PC-3 (cell line): ENCODE measurements at regions of chr4 and their contacts with region 1.

Region 1: GRCh38 chr4:151227731-151228130 is 49.2 kb upstream of the PRSS48 start:
- DNase-seq: peak; percentile 35
- ATAC-seq: peak; percentile 51
- H3K4me3 ChIP-seq: no peak overlapping the region
- H3K27ac ChIP-seq: no peak overlapping the region
- H3K4me1 ChIP-seq: peaks cover 37% of the 10 kb centered on the region
- H3K27me3 ChIP-seq: no peaks in the 10 kb centered on the region
- CTCF ChIP-seq: no peak

Region 2: GRCh38 chr4:151169223-151169622 is 58.5 kb before region 1 on chr4:
- CTCF ChIA-PET with region 1: no interaction called
- POLR2A ChIA-PET with region 1: no interaction called
- intact Hi-C with region 1: loop called (anchors 5 kb)
- DNase-seq: no peak
- ATAC-seq: no peak
- H3K4me3 ChIP-seq: no peak overlapping the region
- H3K27ac ChIP-seq: no peak overlapping the region
- H3K4me1 ChIP-seq: peaks cover 16% of the 10 kb centered on the region
- H3K27me3 ChIP-seq: no peaks in the 10 kb centered on the region
- CTCF ChIP-seq: no peak

Region 3: DNA sequence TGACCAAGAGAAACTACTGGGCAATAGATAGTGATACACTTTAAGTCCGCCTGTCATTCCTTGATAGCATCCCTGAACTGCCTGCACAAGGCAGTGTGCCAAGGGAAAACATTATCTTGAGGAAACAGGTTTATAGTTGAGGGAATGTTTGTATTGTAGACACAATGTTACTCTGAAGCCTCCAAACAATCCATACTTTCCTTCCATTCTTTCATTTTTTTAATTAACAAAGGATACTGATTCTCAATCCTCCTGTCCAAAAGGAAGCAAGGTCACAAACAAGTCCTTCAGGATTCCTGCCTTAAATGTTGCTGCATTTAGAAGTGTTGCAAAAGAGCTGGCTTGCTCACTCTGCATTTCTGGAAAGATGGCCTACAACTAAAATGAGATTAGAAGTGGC is 12.4 kb before region 1 on chr4:
- CTCF ChIA-PET with region 1: no interaction called
- POLR2A ChIA-PET with region 1: no interaction called
- intact Hi-C with region 1: no loop called
- DNase-seq: no peak
- ATAC-seq: no peak
- H3K4me3 ChIP-seq: no peak overlapping the region
- H3K27ac ChIP-seq: no peak overlapping the region
- H3K4me1 ChIP-seq: 0 out of 2 replicates have a peak, but pooled peaks cover 4% of the 10 kb centered on the region
- H3K27me3 ChIP-seq: no peaks in the 10 kb centered on the region
- CTCF ChIP-seq: no peak

Region 4: GRCh38 chr4:151238477-151238876 is 10.7 kb after region 1 on chr4:
- CTCF ChIA-PET with region 1: no interaction called
- POLR2A ChIA-PET with region 1: interaction called, 10 read pairs
- intact Hi-C with region 1: no loop called
- DNase-seq: peak; percentile 6
- ATAC-seq: peak; percentile 45
- H3K4me3 ChIP-seq: no peak overlapping the region
- H3K27ac ChIP-seq: no peak overlapping the region
- H3K4me1 ChIP-seq: no peaks in the 10 kb centered on the region
- H3K27me3 ChIP-seq: no peaks in the 10 kb centered on the region
- CTCF ChIP-seq: peak; percentile 26; the same call in 1 of the 2 replicates

Region 5: DNA sequence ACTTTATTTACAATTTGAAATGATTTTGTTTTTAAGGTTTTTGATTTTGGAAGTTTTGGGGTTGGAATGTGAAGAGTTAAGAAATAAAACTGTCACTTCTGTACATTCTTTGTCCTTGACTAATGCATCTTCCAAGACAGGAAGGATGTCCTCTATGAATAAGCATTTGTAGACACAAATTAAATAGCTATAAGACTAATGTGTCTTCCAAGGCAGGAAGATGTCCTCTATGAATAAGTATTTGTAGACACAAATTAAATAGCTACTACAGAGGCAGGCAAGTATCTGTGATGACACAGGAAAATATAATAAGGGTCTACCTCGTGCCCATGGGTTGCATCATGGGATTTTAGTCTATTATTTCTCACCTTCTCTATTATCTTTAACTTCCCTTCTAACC is 63.8 kb after region 1 on chr4:
- CTCF ChIA-PET with region 1: no interaction called
- POLR2A ChIA-PET with region 1: no interaction called
- intact Hi-C with region 1: no loop called
- DNase-seq: peak; percentile 57
- ATAC-seq: peak; percentile 89
- H3K4me3 ChIP-seq: no peak overlapping the region
- H3K27ac ChIP-seq: peak overlapping the region; percentile 75
- H3K4me1 ChIP-seq: peaks cover 25% of the 10 kb centered on the region
- H3K27me3 ChIP-seq: no peaks in the 10 kb centered on the region
- CTCF ChIP-seq: no peak